Sigmoid colon (tissue), 7 donors: ENCODE measurements at regions of chr13 and their contacts with region 1.

Region 1: GRCh38 chr13:102452831-102453230 is 51.0 kb upstream of the FGF14 start:
- DNase-seq: no peak
- H3K4me3 ChIP-seq: no peak overlapping the region
- H3K27ac ChIP-seq: no peak overlapping the region
- H3K4me1 ChIP-seq: no peaks in the 10 kb centered on the region
- H3K27me3 ChIP-seq: no peaks in the 10 kb centered on the region
- CTCF ChIP-seq: no peak
- EP300 ChIP-seq: no peak
- POLR2A ChIP-seq: no peak

Region 2: DNA sequence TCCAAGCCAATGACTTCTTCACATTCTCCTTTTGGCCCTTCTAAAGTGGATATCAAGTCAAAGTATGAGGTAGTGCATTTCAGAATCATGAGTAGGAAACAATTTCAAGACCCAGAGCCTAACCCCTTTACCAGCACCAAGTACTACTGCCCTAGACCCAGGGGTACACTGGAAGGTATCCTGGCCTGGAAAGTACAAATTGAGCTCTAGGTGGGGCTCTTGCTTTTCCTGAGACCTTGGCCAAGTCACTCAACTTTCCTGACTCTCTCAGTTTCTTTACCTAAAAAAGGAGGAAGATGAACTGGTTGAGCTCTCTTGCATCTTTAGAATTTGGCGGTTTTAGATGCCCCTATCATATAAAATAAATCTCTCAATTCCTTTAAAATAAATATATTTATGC is 255.6 kb before region 1 on chr13:
- intact Hi-C with region 1: loop called (anchors 10 kb)
- DNase-seq: no peak
- H3K4me3 ChIP-seq: no peak overlapping the region
- H3K27ac ChIP-seq: no peak overlapping the region
- H3K4me1 ChIP-seq: no peaks in the 10 kb centered on the region
- H3K27me3 ChIP-seq: no peaks in the 10 kb centered on the region
- CTCF ChIP-seq: no peak
- EP300 ChIP-seq: no peak
- POLR2A ChIP-seq: no peak